Activated CD4-positive, alpha-beta memory T cell treated with anti-CD3 and anti-CD28 coated beads for 36 hours (primary cell): ENCODE measurements at regions of chr7 and their contacts with region 1.

Region 1: DNA sequence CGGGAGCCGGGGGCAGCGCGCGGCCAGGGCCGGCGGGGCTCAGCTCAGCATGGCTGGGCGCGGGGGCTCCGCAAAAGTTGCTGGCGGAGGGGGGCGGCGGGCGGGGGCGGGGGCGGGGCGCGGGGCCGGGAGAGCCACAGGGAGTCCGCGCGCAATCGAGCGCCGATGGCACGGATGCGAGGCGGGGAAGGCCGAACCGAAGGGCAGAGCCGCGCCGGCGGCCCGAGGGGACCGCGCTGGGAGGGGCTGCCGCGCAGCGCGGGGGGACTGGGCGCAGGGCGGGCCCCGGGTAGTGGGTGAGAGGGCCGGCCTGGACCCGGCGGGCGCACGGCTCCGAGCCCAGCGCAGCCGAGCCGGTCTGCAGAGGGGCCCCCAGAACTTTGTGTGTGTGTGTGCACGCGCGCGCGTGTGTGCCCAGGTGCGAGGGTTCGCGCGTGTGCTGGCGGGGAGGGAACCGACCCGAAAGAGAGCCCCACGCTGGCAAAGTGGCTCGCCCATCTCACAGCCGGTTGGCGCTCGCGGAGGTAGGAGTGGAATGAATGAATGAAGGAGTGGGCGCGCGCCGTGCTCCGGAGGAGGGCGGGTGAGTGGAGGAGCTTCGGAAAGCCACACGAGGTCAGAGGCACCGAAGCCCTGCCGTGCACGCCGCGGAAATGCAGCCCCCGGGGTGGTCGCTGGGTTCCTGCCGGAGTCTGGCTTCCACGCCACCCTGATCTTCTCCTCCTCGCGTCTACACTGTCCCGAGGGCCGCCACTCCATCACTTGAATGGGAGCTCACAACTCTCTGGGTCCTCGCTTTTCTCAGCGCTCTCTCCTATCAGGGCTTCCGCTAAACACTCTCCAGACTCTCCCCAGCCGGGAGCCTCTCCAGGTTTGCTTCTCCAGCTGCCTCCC is at the start of gene HIPK2:
- DNase-seq: peak; percentile 74
- H3K4me3 Mint-ChIP-seq: peak within 1 kb of the TSS; percentile 95
- H3K27ac Mint-ChIP-seq: peak within 1 kb of the TSS; percentile 90
- H3K4me1 Mint-ChIP-seq: peaks cover 36% of the 10 kb centered on the region
- H3K27me3 Mint-ChIP-seq: peaks cover 15% of the 10 kb centered on the region
- total RNA-seq, gene HIPK2: 18.9 to 19.1 TPM

Region 2: GRCh38 chr7:139246905-139247304 is 531.3 kb before region 1 on chr7:
- CTCF ChIA-PET with region 1: no interaction called
- POLR2A ChIA-PET with region 1: no interaction called
- intact Hi-C with region 1: no loop called
- DNase-seq: no peak
- H3K4me3 Mint-ChIP-seq: no peak overlapping the region
- H3K27ac Mint-ChIP-seq: no peak overlapping the region
- H3K4me1 Mint-ChIP-seq: peaks cover 6% of the 10 kb centered on the region
- H3K27me3 Mint-ChIP-seq: no peaks in the 10 kb centered on the region

Region 3: DNA sequence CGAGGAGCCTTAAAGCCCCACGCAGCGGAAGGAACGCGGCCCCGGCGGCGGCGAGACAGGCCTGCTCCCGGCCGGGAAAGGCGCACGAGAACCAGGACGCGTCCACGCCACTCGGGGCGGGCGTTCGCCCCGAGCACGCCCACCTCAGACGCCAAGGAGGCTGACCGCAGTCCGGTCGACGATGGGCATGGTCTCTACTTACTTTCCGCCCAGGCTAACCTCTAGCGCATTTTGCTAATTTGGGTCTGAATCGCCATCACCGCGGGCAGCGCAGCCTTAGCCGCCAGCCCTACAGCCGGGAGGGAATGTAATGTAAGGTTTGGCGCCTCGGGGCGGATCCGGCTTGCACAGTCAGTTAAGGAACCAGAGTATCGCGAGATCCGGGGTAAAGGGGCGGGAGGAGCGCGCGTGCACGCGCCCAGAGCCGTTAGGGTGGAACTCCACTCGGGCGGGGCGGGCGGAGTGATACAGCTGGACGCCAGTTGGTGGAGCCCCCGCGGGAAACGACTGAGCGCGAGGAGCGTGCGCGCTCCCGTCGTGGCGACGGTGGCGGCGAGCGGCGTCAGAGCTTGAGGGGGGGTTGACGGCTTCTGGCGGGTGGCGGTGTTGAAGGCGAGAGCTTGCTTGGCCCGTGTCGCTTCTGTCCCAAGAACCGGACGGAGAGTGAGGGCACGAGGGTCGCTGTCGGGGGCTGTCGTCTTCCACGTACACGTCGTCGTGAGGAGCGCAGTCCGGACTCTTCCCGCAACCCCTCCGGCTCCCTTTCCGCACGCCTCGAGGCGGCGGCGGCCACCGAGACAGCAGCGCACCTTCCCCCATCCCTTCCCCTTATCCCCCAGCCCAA is 418.6 kb before region 1 on chr7 and contains the start of gene LUC7L2:
- CTCF ChIA-PET with region 1: no interaction called
- POLR2A ChIA-PET with region 1: no interaction called
- intact Hi-C with region 1: loop called (anchors 10 kb)
- DNase-seq: peak; percentile 100
- H3K4me3 Mint-ChIP-seq: peak within 1 kb of the TSS; percentile 97
- H3K27ac Mint-ChIP-seq: peak within 1 kb of the TSS; percentile 99
- H3K4me1 Mint-ChIP-seq: peaks cover 40% of the 10 kb centered on the region
- H3K27me3 Mint-ChIP-seq: no peaks in the 10 kb centered on the region
- total RNA-seq, gene LUC7L2: 105 to 114 TPM

Region 4: DNA sequence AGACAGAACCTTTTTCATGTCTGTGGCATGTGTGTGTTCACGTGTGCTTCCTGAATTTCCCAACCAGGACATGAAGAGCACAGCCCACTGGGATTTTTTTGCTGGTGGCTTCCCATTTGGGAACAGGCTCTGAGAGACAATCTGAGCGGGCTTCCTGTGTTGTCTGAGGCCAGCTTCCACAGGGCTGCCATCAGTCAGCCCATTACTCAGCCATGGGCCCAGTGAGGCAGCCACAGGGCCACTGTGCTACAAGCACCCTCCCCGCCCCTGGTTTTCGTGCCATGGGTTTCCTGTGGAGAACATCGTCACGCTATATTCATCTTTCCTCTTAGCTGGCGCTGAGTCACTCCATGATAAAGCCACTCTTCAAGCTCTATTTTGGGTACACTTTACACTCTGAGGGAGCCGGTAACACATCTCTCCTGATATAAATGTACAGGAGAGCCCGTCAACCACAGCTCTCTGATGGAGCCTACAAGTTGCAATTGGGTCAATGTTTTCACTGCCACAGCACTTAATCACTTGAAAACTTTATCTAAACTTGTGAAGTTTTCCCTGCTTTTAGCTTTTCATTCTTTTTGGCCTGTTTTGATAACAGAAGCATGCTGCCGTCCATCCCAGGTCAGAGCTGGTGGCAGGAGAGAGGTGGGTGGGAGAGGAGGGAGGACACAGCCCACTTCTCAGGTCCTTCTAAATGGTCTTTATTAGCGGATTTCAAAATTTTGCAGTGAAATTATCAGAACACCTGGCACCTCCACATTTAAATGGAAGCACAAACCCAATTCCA is 97.3 kb before region 1 on chr7:
- CTCF ChIA-PET with region 1: interaction called, 3 read pairs
- POLR2A ChIA-PET with region 1: interaction called, 4 read pairs
- intact Hi-C with region 1: loop called (anchors 1 kb)
- DNase-seq: peak; percentile 92
- H3K4me3 Mint-ChIP-seq: no peak overlapping the region
- H3K27ac Mint-ChIP-seq: peak overlapping the region; percentile 94
- H3K4me1 Mint-ChIP-seq: peaks cover 48% of the 10 kb centered on the region
- H3K27me3 Mint-ChIP-seq: no peaks in the 10 kb centered on the region

Region 5: DNA sequence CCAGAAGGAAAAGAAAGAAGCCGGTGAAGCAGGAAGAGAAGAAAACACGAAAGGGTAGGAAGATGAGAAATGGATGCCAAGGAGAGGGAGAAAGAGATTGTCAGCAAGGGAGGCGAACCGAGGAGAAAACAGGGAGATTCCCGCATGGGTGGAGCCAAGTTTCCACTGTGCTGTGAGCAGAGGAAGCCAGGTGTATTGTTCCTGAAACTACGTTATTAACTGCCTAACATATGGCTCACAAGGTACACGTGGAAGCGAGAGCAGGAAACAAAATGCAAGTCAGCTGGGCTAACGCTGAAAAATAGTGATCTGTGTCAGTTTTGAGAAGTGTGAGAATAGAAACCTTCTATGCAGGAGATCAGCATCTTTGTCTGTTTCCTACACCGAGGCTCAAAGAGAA is 20.0 kb after region 1 on chr7:
- CTCF ChIA-PET with region 1: no interaction called
- POLR2A ChIA-PET with region 1: no interaction called
- intact Hi-C with region 1: loop called (anchors 2 kb)
- DNase-seq: peak; percentile 35
- H3K4me3 Mint-ChIP-seq: no peak overlapping the region
- H3K27ac Mint-ChIP-seq: no peak overlapping the region
- H3K4me1 Mint-ChIP-seq: peaks cover 13% of the 10 kb centered on the region
- H3K27me3 Mint-ChIP-seq: no peaks in the 10 kb centered on the region

Region 6: DNA sequence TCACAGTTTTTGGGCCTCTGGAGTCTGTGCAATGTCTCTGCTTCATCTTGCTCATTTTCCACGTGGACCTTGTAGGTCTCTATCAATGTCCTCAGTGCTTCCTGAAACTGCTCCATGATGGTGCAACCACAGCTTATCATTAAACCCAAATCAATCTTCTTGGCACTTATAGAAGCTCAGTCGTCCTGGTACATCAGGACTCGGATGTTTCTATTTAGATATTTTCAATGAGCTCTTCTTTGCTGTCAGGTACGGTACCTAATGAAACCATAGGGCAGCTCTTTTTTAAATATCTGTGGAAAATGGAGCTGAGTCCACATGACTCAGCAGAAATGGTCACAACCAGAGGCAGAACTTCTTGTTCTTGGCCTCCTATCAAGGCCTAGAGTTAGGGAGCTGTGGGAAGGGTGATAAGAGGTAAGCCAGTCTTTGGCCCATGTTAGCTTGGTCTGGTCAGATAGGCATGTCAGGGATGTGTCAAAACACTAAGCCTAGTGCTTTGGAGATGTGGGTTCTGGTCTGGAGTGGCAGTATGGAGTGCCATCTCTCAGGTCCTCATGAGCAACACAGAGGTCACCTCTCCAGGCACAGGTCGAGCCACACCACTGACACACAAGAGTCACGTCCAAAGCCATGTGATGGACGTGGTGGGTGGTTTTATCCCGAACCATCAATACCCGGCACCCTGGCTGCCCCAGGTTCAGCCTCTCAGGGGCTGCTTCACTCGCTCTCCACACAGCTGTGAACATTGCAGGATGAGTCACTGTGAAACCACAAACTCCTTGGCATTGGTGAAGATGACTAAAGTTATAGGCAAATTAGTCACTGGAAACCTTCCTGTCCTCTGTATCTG is 137.9 kb after region 1 on chr7:
- CTCF ChIA-PET with region 1: interaction called, 3 read pairs
- POLR2A ChIA-PET with region 1: interaction called, 4 read pairs
- intact Hi-C with region 1: loop called (anchors 1 kb)
- DNase-seq: peak; percentile 85
- H3K4me3 Mint-ChIP-seq: peak overlapping the region; percentile 24
- H3K27ac Mint-ChIP-seq: peak overlapping the region; percentile 80
- H3K4me1 Mint-ChIP-seq: peaks cover 28% of the 10 kb centered on the region
- H3K27me3 Mint-ChIP-seq: peaks cover 2% of the 10 kb centered on the region

Region 7: GRCh38 chr7:140062528-140063299 is 284.5 kb after region 1 on chr7 and contains the start of gene PARP12:
- CTCF ChIA-PET with region 1: no interaction called
- POLR2A ChIA-PET with region 1: no interaction called
- intact Hi-C with region 1: loop called (anchors 10 kb)
- DNase-seq: peak; percentile 89
- H3K4me3 Mint-ChIP-seq: peak within 1 kb of the TSS; percentile 80
- H3K27ac Mint-ChIP-seq: peak within 1 kb of the TSS; percentile 42
- H3K4me1 Mint-ChIP-seq: peaks cover 34% of the 10 kb centered on the region
- H3K27me3 Mint-ChIP-seq: no peaks in the 10 kb centered on the region
- total RNA-seq, gene PARP12: 26.7 to 30.6 TPM

Region 8: DNA sequence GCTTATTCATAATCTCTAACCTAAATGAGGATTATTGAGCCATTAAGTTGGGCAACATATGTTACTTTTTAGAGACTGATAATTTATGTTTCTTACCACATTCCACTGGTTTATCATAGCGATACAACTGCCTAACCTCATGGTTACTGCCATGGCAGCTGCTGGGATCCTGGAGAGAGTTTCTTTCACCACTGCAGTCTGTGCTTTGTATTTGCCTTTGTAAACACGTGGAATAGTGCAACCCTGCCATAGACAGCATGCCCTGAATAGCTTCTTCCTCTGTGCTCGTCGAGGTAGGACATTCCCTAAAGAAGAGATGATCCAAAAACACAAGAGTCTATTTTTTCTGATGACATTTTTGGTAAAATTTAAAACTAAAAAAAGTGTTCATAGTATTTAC is 318.3 kb after region 1 on chr7:
- CTCF ChIA-PET with region 1: no interaction called
- POLR2A ChIA-PET with region 1: no interaction called
- intact Hi-C with region 1: no loop called
- DNase-seq: no peak
- H3K4me3 Mint-ChIP-seq: no peak overlapping the region
- H3K27ac Mint-ChIP-seq: no peak overlapping the region
- H3K4me1 Mint-ChIP-seq: no peaks in the 10 kb centered on the region
- H3K27me3 Mint-ChIP-seq: no peaks in the 10 kb centered on the region